ENCODE measurements at regions of chr17 and their contacts with region 1.

Region 1: GRCh38 chr17:5065227-5065744 is 13.0 kb upstream of the ZFP3 start:
- DNase-seq: no peak
- H3K4me3 ChIP-seq: no peak overlapping the region
- CTCF ChIP-seq: no peak

Region 2: GRCh38 chr17:4872786-4873185 is 192.5 kb before region 1 on chr17:
- CTCF ChIA-PET with region 1: no interaction called
- POLR2A ChIA-PET with region 1: no interaction called
- DNase-seq: no peak
- H3K4me3 ChIP-seq: no peak overlapping the region
- CTCF ChIP-seq: no peak

Region 3: DNA sequence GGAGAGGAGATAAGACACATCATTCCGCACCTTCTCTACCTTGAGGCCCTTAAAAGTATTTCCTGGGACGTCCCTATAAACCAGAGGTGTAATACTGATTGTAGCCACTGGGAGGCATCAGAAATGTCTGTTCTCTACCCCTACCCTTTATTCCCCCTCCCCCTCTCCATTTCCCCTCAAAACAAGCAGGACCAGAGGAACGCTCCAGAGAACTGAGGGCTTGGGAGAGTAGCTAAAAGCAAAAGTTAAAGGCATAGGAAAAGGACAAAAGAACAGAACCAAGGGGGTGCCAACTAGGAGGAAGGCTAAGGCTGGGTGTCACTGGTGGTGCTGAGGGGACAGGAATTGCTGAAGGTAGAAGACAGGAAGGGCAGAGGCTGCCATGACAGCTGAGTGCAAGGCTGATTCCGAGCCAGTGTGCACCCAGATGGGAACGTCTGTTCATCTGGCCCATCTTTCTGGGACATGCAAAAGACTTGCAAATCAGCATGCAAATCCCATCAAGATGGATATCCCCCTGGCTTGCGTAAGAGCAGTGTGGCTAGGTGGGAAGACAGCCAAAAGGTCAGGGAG is 84.6 kb before region 1 on chr17:
- CTCF ChIA-PET with region 1: interaction called, 77 read pairs
- POLR2A ChIA-PET with region 1: no interaction called
- DNase-seq: no peak
- H3K4me3 ChIP-seq: no peak overlapping the region
- CTCF ChIP-seq: peak; percentile 49

Region 4: GRCh38 chr17:5049314-5049895 is 15.9 kb before region 1 on chr17:
- CTCF ChIA-PET with region 1: interaction called, 17 read pairs
- POLR2A ChIA-PET with region 1: no interaction called
- DNase-seq: no peak
- H3K4me3 ChIP-seq: no peak overlapping the region
- CTCF ChIP-seq: no peak